Lower leg skin (tissue), 4 donors: ENCODE measurements at regions of chr2 and their contacts with region 1.

Region 1: GRCh38 chr2:26144953-26145680 is 27.8 kb upstream of the GAREM2 start:
- DNase-seq: peak; percentile 38 to 88
- H3K4me3 ChIP-seq: no peak overlapping the region
- CTCF ChIP-seq: peak in 1 of 3 donors; percentile 74
- POLR2A ChIP-seq: no peak

Region 2: GRCh38 chr2:25939257-25939668 is 205.9 kb before region 1 on chr2:
- intact Hi-C with region 1: no loop called
- DNase-seq: no peak
- H3K4me3 ChIP-seq: no peak overlapping the region
- CTCF ChIP-seq: no peak
- POLR2A ChIP-seq: no peak

Region 3: DNA sequence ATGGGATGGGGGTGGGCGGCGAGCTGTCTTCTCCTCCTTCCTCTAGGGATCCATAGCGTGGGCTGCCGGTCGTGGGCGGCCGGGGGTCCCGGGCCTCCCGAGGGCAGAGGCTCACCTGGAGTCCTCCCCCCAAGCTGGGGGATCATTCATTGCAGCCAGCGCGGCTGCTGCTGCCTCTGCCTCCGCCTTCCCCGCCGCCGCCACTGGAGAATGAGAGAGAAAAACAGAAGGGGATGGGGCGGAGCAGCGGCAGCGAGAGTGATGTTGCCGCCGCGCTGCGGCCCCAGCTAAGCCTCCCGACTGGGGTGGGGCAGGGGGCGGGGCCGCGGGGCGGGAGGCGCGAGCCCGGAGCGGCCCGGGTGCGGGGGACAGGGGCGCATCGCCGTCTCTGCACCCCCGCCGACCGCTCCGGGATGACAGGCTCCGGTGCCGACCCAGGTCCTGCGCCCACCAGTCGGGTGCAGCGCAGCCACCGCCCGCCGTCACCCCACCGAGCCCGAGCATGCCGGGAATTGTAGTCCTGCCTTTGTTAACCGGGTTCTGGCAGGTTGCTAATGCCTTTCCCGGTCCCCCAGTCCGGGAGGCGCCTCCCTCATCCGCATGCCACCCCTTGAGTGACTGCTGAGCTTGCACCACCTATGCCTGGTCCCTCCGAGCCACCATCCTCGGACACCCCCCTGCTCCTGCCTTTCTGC is 162.7 kb before region 1 on chr2 and contains the start of gene KIF3C:
- intact Hi-C with region 1: loop called (anchors 10 kb)
- DNase-seq: peak in 1 of 2 donors; percentile 92
- H3K4me3 ChIP-seq: peak within 1 kb of the TSS; percentile 57
- CTCF ChIP-seq: no peak
- POLR2A ChIP-seq: no peak
- total RNA-seq, gene KIF3C: 3.6 to 6.7 (median 4.2) TPM

Region 4: DNA sequence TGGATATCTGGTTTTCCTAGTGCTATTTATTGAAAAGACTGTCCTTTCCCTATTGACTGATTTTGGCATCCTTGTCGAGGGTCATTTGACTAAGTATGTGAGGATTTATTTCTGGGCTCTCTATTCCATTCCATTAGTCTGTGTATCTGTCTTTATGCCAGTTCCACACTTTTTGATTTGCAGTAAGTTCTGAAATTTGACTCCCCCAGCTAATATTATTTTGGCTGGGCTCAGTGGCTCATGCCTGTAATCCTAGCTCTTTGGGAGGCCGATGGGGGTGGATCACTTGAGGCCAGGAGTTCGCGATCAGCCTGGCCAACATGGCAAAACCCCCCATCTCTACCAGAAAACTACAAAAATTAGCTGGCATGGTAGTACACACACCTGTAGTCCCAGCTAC is 19.0 kb before region 1 on chr2:
- intact Hi-C with region 1: loop called (anchors 1 kb)
- DNase-seq: no peak
- H3K4me3 ChIP-seq: no peak overlapping the region
- CTCF ChIP-seq: no peak
- POLR2A ChIP-seq: no peak